AG04450 (cell line): ENCODE measurements at regions of chr15 and their contacts with region 1.

Region 1: DNA sequence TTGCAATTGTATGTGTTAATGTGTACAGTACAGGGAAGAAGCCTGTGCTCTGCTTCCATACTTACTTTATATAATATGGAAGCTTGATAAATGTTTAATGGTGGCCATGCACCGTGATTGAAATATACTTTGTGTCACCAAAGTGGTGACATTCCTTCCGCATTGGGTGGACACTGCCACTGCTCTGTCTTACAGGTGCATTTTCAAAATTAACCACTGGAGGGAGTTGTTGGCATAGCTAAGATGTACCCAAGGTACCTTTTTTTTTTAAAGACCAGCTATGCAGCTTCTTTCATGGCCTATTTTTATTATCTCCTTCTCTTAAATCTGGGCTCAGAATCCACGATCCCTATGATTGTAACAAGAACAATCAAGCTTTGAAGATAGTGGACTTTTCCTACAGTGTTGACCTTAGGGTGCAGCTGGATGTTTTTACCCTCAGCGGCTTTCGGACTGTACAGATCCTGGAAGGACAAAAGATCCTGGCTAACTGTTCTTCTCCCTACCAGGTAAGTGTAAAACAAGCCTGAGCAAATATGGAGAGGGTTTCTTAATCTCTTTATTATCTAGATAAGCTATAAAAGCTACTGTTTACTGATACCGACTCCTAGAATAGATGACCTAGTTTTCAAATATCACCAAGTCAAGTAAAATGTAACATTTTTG is 21.6 kb upstream of the PAK6 start:
- DNase-seq: peak; percentile 32
- H3K4me3 ChIP-seq: no peak overlapping the region
- H3K27ac ChIP-seq: no peak overlapping the region
- H3K27me3 ChIP-seq: no peaks in the 10 kb centered on the region
- CTCF ChIP-seq: peak; percentile 82

Region 2: GRCh38 chr15:40044717-40045571 is 172.3 kb before region 1 on chr15:
- CTCF ChIA-PET with region 1: interaction called, 17 read pairs
- POLR2A ChIA-PET with region 1: no interaction called
- DNase-seq: no peak
- H3K4me3 ChIP-seq: peak overlapping the region; percentile 31
- H3K27ac ChIP-seq: no peak overlapping the region
- H3K27me3 ChIP-seq: no peaks in the 10 kb centered on the region
- CTCF ChIP-seq: peak; percentile 93

Region 3: GRCh38 chr15:40069178-40070165 is 147.8 kb before region 1 on chr15:
- CTCF ChIA-PET with region 1: no interaction called
- POLR2A ChIA-PET with region 1: no interaction called
- DNase-seq: no peak
- H3K4me3 ChIP-seq: no peak overlapping the region
- H3K27ac ChIP-seq: no peak overlapping the region
- H3K27me3 ChIP-seq: no peaks in the 10 kb centered on the region
- CTCF ChIP-seq: no peak

Region 4: DNA sequence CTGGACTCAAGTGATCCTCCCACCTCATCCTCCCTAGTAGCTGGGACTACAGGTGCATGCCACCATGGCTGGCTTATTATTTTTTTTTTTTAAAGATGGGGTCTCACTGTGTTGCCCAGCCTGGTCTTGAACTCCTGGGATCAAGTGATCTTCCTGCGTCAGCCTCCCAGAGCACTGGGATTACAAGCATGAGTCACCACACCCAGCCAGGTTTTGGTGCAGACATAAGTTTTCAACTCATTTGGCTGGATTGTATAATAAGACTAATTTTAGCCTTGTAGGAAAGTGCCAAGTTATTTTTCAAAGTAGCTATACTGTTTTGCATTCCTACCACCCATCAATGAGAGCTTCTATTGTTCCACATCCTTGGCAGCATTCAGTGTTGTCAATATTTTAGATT is 24.4 kb before region 1 on chr15:
- CTCF ChIA-PET with region 1: interaction called, 13 read pairs
- POLR2A ChIA-PET with region 1: no interaction called
- DNase-seq: no peak
- H3K4me3 ChIP-seq: no peak overlapping the region
- H3K27ac ChIP-seq: no peak overlapping the region
- H3K27me3 ChIP-seq: no peaks in the 10 kb centered on the region
- CTCF ChIP-seq: no peak

Region 5: DNA sequence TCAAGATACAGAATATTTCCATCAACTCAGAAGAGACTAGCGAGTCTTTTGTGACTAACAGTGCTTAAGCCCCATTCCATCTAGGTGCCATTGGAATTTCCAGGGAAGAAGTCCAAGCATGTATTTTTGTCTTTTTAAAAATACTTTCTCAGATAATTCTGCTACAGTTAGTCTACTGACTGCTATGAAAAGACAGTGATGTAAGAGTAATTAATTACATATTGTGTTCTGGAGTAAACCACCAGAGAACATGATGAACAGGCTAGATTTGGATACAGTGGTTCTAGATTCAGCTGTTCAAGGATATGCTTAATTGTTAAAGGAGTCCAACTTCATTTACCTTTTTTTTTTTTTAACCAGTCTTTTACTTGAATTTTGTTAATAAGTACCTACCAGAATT is 13.2 kb before region 1 on chr15:
- CTCF ChIA-PET with region 1: interaction called, 22 read pairs
- POLR2A ChIA-PET with region 1: no interaction called
- DNase-seq: no peak
- H3K4me3 ChIP-seq: no peak overlapping the region
- H3K27ac ChIP-seq: no peak overlapping the region
- H3K27me3 ChIP-seq: no peaks in the 10 kb centered on the region
- CTCF ChIP-seq: no peak

Region 6: GRCh38 chr15:40238532-40239403 is 21.5 kb after region 1 on chr15 and contains the start of gene PAK6:
- CTCF ChIA-PET with region 1: interaction called, 12 read pairs
- POLR2A ChIA-PET with region 1: no interaction called
- DNase-seq: no peak
- H3K4me3 ChIP-seq: peak within 1 kb of the TSS; percentile 53
- H3K27ac ChIP-seq: no peak within 1 kb of the TSS
- H3K27me3 ChIP-seq: peaks cover 9% of the 10 kb centered on the region
- CTCF ChIP-seq: no peak
- polyA plus RNA-seq, gene PAK6: not detected in 2 replicates

Region 7: DNA sequence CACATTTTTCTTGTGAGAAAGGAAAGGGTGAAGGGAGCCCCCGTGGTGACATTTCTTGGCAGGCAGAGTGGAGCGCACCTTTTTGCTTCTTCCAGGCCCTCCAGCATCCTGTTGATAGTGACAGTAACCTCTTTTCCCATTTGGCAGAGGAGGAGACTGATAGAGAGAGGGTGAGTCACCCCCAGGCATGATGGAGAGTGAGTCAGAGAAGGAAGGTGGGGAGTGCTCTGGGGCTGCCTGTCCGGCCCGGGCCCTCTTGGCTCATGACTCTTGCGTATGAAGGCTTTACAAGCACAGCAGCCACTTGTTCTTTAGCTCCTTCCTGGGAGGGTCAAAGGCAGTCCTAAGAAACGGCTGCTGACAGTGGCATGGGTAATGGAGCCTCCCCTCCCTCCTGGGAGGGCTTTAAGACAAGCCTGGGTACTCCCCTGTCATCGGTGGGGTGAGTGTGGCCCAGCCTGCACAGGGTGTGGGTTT is 49.6 kb after region 1 on chr15:
- CTCF ChIA-PET with region 1: interaction called, 670 read pairs
- POLR2A ChIA-PET with region 1: no interaction called
- DNase-seq: peak; percentile 57
- H3K4me3 ChIP-seq: no peak overlapping the region
- H3K27ac ChIP-seq: peak overlapping the region; percentile 80
- H3K27me3 ChIP-seq: peaks cover 3% of the 10 kb centered on the region
- CTCF ChIP-seq: no peak

Region 8: GRCh38 chr15:40323239-40323952 is 106.1 kb after region 1 on chr15 and contains the start of gene INAFM2:
- CTCF ChIA-PET with region 1: interaction called, 14 read pairs
- POLR2A ChIA-PET with region 1: no interaction called
- DNase-seq: peak; percentile 85
- H3K4me3 ChIP-seq: peak within 1 kb of the TSS; percentile 71
- H3K27ac ChIP-seq: no peak within 1 kb of the TSS
- H3K27me3 ChIP-seq: peaks cover 3% of the 10 kb centered on the region
- CTCF ChIP-seq: peak; percentile 67
- polyA plus RNA-seq, gene INAFM2: 10.4 and 11.4 TPM in 2 replicates

Region 9: DNA sequence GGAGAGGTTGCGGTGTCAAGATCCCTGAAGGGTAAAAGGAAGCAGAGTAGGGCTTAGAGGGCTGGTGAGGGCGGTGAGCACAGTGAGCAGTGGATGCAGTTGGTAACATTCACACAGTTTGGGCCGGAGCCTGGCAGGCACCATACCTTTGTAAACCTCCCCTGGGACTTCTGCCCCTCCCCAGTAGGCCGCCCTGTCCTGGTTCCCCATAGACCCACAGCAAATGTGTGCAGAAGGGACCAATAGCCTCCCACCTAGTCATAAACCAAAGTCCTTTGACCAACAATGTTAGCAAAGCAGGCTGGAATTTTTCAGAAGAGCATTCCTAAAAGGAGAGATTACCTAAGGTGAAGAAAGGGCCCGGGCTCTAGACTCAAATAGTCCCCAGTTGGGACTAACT is 131.9 kb after region 1 on chr15:
- CTCF ChIA-PET with region 1: no interaction called
- POLR2A ChIA-PET with region 1: no interaction called
- DNase-seq: no peak
- H3K4me3 ChIP-seq: no peak overlapping the region
- H3K27ac ChIP-seq: no peak overlapping the region
- H3K27me3 ChIP-seq: peaks cover 9% of the 10 kb centered on the region
- CTCF ChIP-seq: no peak

Region 10: GRCh38 chr15:40582726-40583246 is 365.5 kb after region 1 on chr15:
- CTCF ChIA-PET with region 1: no interaction called
- POLR2A ChIA-PET with region 1: no interaction called
- DNase-seq: no peak
- H3K4me3 ChIP-seq: no peak overlapping the region
- H3K27ac ChIP-seq: no peak overlapping the region
- H3K27me3 ChIP-seq: no peaks in the 10 kb centered on the region
- CTCF ChIP-seq: no peak

Region 11: DNA sequence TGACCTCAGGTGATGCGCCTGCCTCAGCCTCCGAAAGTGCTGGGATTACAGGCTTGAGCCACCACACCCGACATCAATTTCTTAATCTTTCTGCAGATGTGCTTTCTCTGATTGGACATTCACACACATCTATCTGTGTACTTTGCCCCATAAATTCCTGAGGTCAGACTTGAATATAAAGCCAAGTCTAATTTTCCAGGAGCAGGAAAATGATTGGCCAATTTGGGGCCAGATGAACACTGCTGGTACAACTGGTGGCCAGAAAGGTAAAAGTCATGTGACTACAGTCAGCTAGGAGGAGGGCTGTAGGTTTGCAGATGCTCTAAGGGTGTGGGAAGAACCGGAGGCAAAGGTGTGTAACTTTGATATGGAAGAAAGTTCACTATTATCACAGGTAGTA is 474.4 kb after region 1 on chr15:
- CTCF ChIA-PET with region 1: no interaction called
- POLR2A ChIA-PET with region 1: no interaction called
- DNase-seq: no peak
- H3K4me3 ChIP-seq: no peak overlapping the region
- H3K27ac ChIP-seq: no peak overlapping the region
- H3K27me3 ChIP-seq: no peaks in the 10 kb centered on the region
- CTCF ChIP-seq: no peak